ENCODE measurements at regions of chr3 and their contacts with region 1.

Region 1: DNA sequence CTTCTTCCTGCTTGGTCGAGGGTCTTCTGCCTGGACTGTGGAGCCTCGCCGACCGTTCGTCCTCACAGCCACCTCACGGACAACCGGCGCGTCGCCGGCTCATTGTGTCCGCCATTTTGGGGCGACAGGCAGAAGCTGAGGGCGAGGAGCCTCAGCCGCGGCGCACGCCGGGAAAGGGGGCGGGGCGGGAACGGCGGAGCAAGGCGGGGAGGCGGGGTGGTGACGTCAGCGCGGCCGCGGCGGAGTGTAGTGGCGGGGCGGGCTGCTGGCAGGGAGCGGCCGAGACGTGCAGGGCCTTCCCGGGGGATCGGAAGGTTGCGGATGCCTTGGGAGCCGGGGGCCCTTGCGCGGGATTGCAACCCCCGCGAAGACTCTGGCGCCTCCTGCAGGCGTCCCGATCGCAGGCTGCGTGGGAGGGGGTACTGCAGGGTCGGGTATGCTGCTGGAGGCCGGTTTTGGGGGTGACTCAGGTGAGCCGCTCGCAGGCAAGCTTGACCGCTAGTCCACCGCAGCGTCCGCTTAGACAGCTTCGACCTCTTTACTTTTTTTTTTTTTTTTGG is at the start of gene WDR82:
- DNase-seq: peak; percentile 98
- ATAC-seq: peak; percentile 93
- H3K4me3 Mint-ChIP-seq: peak within 1 kb of the TSS; percentile 94
- H3K27ac Mint-ChIP-seq: peak within 1 kb of the TSS; percentile 100
- H3K4me1 Mint-ChIP-seq: peaks cover 34% of the 10 kb centered on the region
- H3K27me3 Mint-ChIP-seq: no peaks in the 10 kb centered on the region
- CTCF ChIP-seq: 0 out of 2 replicates have a peak, but pooled peaks have one; percentile 32
- total RNA-seq, gene WDR82: 64.6 to 69.7 TPM (median 64.9 TPM) in 3 replicates

Region 2: GRCh38 chr3:52238761-52239701 is 39.6 kb before region 1 on chr3 and contains the start of gene TWF2:
- CTCF ChIA-PET with region 1: interaction called, 41 read pairs
- POLR2A ChIA-PET with region 1: interaction called, 19 read pairs
- DNase-seq: peak; percentile 77
- ATAC-seq: peak; percentile 74
- H3K4me3 Mint-ChIP-seq: peak within 1 kb of the TSS; percentile 95
- H3K27ac Mint-ChIP-seq: peak within 1 kb of the TSS; percentile 89
- H3K4me1 Mint-ChIP-seq: peaks cover 43% of the 10 kb centered on the region
- H3K27me3 Mint-ChIP-seq: peaks cover 16% of the 10 kb centered on the region
- CTCF ChIP-seq: no peak
- total RNA-seq, gene TWF2: 60.8 to 71.1 TPM (median 66.3 TPM) in 3 replicates

Region 3: DNA sequence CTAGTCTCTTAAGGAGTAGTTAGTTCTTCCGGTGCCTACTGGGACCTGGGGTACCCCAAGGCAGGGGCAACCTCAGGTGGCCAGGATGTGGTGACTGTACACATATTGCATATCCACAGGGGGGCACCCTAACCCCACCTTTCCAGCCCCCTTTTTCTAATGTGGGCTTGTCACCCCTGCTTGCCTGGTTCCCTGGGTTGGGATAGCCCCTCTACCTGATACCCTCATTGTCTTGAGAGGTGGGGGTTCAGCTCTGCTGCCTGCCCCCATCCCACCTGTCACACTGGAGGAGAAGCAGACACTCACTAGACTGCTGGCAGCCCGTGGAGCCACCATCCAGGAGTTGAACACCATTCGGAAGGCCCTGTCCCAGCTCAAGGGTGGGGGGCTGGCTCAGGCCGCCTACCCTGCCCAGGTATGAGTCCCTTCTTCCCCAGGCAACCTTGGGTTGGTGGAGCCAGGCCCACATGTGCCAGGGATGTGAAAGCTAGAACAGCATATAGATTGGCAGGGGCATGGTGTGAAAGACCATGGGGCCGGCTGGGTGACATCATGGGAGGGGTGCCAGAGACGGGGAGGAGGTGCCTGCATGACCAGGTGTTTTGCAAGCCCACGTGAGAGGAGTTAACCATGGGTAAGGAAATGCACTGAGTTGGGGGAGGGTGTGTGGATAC is 13.1 kb after region 1 on chr3:
- CTCF ChIA-PET with region 1: interaction called, 10 read pairs
- POLR2A ChIA-PET with region 1: interaction called, 26 read pairs
- DNase-seq: peak; percentile 69
- ATAC-seq: peak; percentile 10
- H3K4me3 Mint-ChIP-seq: no peak overlapping the region
- H3K27ac Mint-ChIP-seq: no peak overlapping the region; the same call in 1 of the 2 replicates
- H3K4me1 Mint-ChIP-seq: peaks cover 5% of the 10 kb centered on the region
- H3K27me3 Mint-ChIP-seq: no peaks in the 10 kb centered on the region
- CTCF ChIP-seq: peak; percentile 27; the same call in 1 of the 2 replicates